ENCODE measurements at regions of chr7 and their contacts with region 1.

Region 1: DNA sequence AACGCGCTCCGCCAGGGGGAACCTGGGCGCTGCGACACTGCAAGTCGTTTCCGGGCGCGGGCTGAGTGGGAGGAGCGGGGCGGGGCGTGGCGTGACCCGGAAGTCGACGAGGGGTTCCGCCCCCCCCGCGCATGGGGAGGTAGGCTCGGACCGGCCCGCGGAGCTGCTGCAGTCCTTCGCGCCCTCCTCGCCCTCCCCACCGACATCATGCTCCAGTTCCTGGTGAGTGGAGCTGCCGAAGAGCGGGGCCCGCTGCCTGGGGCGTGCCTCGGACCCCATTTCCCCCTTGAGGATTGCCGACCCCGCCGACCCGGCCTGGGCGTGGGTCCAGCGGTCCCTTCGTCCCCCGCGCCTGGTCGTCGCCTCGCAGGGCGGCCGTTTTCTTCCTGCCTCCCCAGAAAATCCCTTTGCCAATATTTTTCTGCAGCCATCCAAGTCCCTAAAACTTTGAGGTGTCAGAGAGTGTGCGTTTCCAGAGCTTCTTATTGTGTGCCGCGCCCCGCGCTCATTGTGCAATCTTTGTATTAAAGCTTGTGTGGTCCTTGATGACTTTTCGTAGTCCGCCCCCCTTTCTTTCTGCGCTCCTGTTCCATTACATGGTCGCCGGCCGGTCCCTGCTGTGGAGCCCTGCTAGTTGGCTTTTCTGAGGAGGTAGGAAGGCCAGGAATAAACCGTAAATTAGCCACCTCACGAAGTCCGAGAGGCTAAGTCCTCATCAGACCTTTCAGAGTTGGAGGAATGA is at the start of gene STMP1:
- DNase-seq: peak; percentile 72
- ATAC-seq: peak; percentile 99
- H3K4me3 ChIP-seq: peak within 1 kb of the TSS; percentile 91 to 98
- H3K27ac ChIP-seq: peak within 1 kb of the TSS; percentile 95
- H3K4me1 ChIP-seq: peaks cover 5% of the 10 kb centered on the region; the same call in 1 of the 2 replicates
- H3K27me3 ChIP-seq: no peaks in the 10 kb centered on the region
- CTCF ChIP-seq: peak; percentile 83
- total RNA-seq, gene STMP1: 29.5 TPM

Region 2: DNA sequence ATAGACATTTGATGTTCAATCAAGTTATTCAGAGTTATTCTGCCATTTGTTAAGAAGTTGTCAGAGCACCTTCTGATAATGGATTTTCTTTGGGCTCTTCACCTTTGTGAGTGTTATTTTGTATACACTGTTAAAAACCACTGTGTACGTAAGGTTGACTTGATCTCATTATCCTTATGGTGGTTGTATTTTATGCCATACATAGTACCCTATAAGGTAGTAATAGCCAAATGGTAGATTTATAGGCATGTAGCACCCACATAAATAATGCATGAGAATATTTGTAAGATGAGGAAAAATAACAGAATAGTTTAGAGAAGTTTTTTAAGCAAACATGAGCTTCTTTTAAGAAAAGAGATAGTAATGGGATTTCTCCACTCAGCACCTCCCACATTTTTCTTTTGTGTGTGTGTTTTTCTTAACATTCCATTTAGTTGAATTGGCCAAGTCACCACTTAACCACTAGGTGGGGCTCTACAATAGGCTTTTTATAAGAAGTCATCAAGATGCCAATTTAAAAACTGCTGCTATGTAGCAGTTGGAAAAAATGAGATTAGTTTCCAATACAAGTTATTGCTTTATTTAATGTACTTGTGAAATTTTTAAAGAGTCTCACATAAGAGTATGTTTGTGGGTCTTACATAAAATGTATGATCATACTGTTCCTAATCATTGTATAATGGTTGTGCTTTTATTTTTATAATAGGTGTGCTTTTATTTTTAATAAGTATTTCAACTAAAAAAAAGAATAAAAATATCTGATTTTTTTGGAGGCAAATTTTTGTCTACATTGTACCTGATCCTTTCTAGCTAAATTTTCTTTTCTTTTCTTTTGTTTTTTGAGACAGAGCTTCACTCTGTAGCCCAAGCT is 41.3 kb before region 1 on chr7:
- CTCF ChIA-PET with region 1: no interaction called
- POLR2A ChIA-PET with region 1: no interaction called
- in situ Hi-C with region 1: loop called (anchors 5 kb)
- intact Hi-C with region 1: no loop called
- DNase-seq: peak; percentile 75
- ATAC-seq: peak; percentile 79
- H3K4me3 ChIP-seq: no peak overlapping the region
- H3K27ac ChIP-seq: no peak overlapping the region
- H3K4me1 ChIP-seq: peaks cover 4% of the 10 kb centered on the region; the same call in 1 of the 2 replicates
- H3K27me3 ChIP-seq: no peaks in the 10 kb centered on the region
- CTCF ChIP-seq: peak; percentile 83; the same call in 1 of the 2 replicates

Region 3: DNA sequence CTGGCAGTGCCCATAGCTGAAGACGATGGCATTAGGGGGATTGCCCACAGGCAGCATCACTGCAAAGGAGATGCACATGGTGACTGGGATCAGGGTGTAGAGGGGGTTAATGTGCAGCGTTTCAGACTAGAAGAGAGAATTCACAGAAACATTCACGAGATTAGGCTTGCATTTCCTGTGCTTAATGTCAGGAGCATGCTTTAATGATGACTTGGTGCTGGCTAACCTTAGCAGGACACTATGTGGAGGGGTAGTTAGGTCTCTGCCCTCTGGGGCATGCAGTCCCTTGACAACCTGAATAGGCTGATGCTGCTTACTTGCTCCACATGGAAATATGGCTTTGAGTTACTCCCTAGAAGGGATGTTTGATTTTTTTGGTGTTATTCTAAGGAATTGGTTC is 21.6 kb after region 1 on chr7:
- CTCF ChIA-PET with region 1: no interaction called
- POLR2A ChIA-PET with region 1: interaction called, 10 read pairs
- in situ Hi-C with region 1: no loop called
- intact Hi-C with region 1: no loop called
- DNase-seq: no peak
- ATAC-seq: peak; percentile 51; the same call in 1 of the 2 replicates
- H3K4me3 ChIP-seq: no peak overlapping the region
- H3K27ac ChIP-seq: no peak overlapping the region
- H3K4me1 ChIP-seq: no peaks in the 10 kb centered on the region
- H3K27me3 ChIP-seq: no peaks in the 10 kb centered on the region
- CTCF ChIP-seq: no peak